ENCODE measurements at regions of chr11 and their contacts with region 1.

Region 1: GRCh38 chr11:12281571-12282478 is 95.5 kb upstream of the PARVA start:
- DNase-seq: peak; percentile 60 to 78 (median 71)
- H3K4me3 ChIP-seq: no peak overlapping the region
- H3K27ac ChIP-seq: no peak overlapping the region
- H3K4me1 ChIP-seq: peaks cover 0 to 5% (median 2%) of the 10 kb centered on the region in 4 experiments
- H3K27me3 ChIP-seq: peaks cover 0 to 5% (median 0%) of the 10 kb centered on the region in 5 experiments

Region 2: GRCh38 chr11:12043959-12044819 is 237.6 kb before region 1 on chr11:
- CTCF ChIA-PET with region 1: interaction called, 422 read pairs
- POLR2A ChIA-PET with region 1: no interaction called
- DNase-seq: peak; percentile 48 to 62 (median 50)
- H3K4me3 ChIP-seq: no peak overlapping the region
- H3K27ac ChIP-seq: no peak overlapping the region
- H3K4me1 ChIP-seq: peaks cover 0 to 8% (median 3%) of the 10 kb centered on the region in 4 experiments
- H3K27me3 ChIP-seq: no peaks in the 10 kb centered on the region

Region 3: GRCh38 chr11:12087075-12088004 is 194.5 kb before region 1 on chr11:
- CTCF ChIA-PET with region 1: interaction called, 43 read pairs
- POLR2A ChIA-PET with region 1: no interaction called
- DNase-seq: peak; percentile 47 to 75 (median 64)
- H3K4me3 ChIP-seq: peak overlapping the region in 1 of 7 experiments; percentile 36
- H3K27ac ChIP-seq: no peak overlapping the region
- H3K4me1 ChIP-seq: peaks cover 10 to 72% (median 45%) of the 10 kb centered on the region in 4 experiments
- H3K27me3 ChIP-seq: no peaks in the 10 kb centered on the region

Region 4: GRCh38 chr11:12102588-12103410 is 179.0 kb before region 1 on chr11:
- CTCF ChIA-PET with region 1: interaction called, 10 read pairs
- POLR2A ChIA-PET with region 1: no interaction called
- DNase-seq: no peak
- H3K4me3 ChIP-seq: no peak overlapping the region
- H3K27ac ChIP-seq: no peak overlapping the region
- H3K4me1 ChIP-seq: peaks cover 14 to 26% (median 16%) of the 10 kb centered on the region in 4 experiments
- H3K27me3 ChIP-seq: no peaks in the 10 kb centered on the region

Region 5: GRCh38 chr11:12251666-12252560 is 29.9 kb before region 1 on chr11:
- CTCF ChIA-PET with region 1: interaction called, 11 read pairs
- POLR2A ChIA-PET with region 1: no interaction called
- DNase-seq: no peak
- H3K4me3 ChIP-seq: no peak overlapping the region
- H3K27ac ChIP-seq: no peak overlapping the region
- H3K4me1 ChIP-seq: no peaks in the 10 kb centered on the region
- H3K27me3 ChIP-seq: no peaks in the 10 kb centered on the region

Region 6: DNA sequence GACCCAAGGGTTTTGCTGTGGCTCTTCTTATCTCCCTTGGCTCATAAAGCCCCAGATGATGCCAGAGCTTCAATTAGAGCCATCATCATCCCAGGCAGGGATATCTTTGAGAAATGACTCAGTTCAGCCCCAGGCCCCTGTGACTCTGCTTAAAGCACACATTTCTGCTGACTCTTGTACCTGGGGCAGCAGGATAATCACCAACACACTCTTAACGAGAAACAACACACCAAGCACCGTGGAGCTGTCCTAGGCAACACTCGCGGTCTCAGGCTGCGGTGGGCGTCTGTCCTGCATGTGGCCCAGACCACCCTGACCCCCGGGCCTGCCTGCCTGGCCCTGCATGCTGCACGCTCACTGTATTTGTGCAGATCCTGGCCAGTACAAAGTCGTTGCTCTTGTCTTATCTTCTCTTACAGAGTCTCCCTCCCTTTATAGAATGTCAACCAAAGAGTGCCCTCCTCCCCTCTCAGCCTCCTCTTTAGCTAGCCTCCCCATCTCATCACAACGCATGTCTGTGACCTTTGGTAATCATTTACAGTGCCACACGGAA is 18.6 kb before region 1 on chr11:
- CTCF ChIA-PET with region 1: interaction called, 11 read pairs
- POLR2A ChIA-PET with region 1: no interaction called
- DNase-seq: no peak
- H3K4me3 ChIP-seq: no peak overlapping the region
- H3K27ac ChIP-seq: no peak overlapping the region
- H3K4me1 ChIP-seq: no peaks in the 10 kb centered on the region
- H3K27me3 ChIP-seq: peaks cover 0 to 2% (median 0%) of the 10 kb centered on the region in 5 experiments

Region 7: DNA sequence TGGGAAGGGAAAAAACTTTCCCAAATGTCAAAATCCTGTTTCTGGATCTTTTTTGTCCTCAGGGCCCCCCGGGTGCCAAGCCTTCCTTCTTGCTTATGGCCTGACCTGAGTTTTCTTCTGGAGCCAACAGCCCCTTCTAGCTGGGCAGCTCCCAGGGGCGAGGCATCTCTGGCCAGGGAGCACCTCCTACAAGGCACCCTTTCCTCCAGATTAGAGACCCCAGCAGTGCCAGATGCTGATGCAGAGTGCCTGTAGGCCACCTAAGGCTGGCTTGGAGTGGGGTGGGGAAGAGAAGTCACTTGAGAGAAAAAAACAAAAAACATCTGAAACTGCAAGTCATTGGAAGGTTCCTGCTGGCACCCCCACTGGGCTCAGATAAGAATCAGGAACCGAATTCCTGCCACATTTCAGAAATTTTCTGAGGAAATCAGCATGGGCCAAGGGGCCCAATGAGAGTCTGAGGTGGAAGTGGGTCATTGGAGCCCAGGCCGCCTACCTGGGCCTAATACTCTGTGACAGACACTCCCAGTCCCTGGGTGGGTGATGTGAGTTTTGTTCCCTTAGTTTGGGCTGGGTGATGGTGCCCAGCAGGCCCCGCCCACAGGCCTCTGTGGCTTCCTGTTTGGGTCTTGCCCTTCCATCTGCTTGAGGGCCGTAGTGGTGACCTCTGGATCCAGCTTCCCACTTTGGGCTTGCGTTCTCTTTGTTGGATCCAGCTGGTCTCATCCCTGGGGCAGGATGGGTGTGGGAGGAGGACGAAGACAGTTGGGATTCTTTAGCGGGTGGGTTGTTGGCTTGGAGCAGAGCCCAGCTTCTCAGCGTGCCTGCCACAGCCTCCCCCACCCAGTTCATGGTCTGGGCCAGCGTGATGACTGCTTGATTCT is 136.1 kb after region 1 on chr11:
- CTCF ChIA-PET with region 1: no interaction called
- POLR2A ChIA-PET with region 1: no interaction called
- DNase-seq: no peak
- H3K4me3 ChIP-seq: no peak overlapping the region
- H3K27ac ChIP-seq: no peak overlapping the region
- H3K4me1 ChIP-seq: no peaks in the 10 kb centered on the region
- H3K27me3 ChIP-seq: peaks cover 0 to 9% (median 4%) of the 10 kb centered on the region in 5 experiments

Measured in common myeloid progenitor, CD34-positive (primary cell).